ENCODE measurements at regions of chr5 and their contacts with region 1.

Region 1: GRCh38 chr5:139560752-139561654 is at the start of gene UBE2D2:
- DNase-seq: peak; percentile 96 to 100 (median 98)
- ATAC-seq: peak; percentile 78
- H3K4me3 ChIP-seq: peak within 1 kb of the TSS; percentile 79
- H3K4me3 Mint-ChIP-seq: peak within 1 kb of the TSS; percentile 99
- H3K27ac ChIP-seq: peak within 1 kb of the TSS; percentile 85 to 88
- H3K27ac Mint-ChIP-seq: peak within 1 kb of the TSS; percentile 92
- H3K4me1 ChIP-seq: peaks cover 36% of the 10 kb centered on the region
- H3K4me1 Mint-ChIP-seq: peaks cover 44% of the 10 kb centered on the region
- H3K27me3 ChIP-seq: no peaks in the 10 kb centered on the region
- H3K27me3 Mint-ChIP-seq: no peaks in the 10 kb centered on the region
- CTCF ChIP-seq: no peak
- total RNA-seq, gene UBE2D2: 164 to 174 TPM

Region 2: GRCh38 chr5:139341650-139342422 is 219.2 kb before region 1 on chr5 and contains the start of gene PAIP2:
- CTCF ChIA-PET with region 1: no interaction called
- POLR2A ChIA-PET with region 1: interaction called, 27 read pairs
- intact Hi-C with region 1: loop called in 1 of 2 experiments (anchors 5 kb)
- DNase-seq: peak; percentile 95 to 99 (median 97)
- ATAC-seq: peak; percentile 82
- H3K4me3 ChIP-seq: peak within 1 kb of the TSS; percentile 94
- H3K4me3 Mint-ChIP-seq: peak within 1 kb of the TSS; percentile 96
- H3K27ac ChIP-seq: peak within 1 kb of the TSS; percentile 100
- H3K27ac Mint-ChIP-seq: peak within 1 kb of the TSS; percentile 95
- H3K4me1 ChIP-seq: peaks cover 34% of the 10 kb centered on the region
- H3K4me1 Mint-ChIP-seq: peaks cover 65% of the 10 kb centered on the region
- H3K27me3 ChIP-seq: no peaks in the 10 kb centered on the region
- H3K27me3 Mint-ChIP-seq: no peaks in the 10 kb centered on the region
- CTCF ChIP-seq: peak; percentile 70
- total RNA-seq, gene PAIP2: 151 to 156 TPM

Region 3: DNA sequence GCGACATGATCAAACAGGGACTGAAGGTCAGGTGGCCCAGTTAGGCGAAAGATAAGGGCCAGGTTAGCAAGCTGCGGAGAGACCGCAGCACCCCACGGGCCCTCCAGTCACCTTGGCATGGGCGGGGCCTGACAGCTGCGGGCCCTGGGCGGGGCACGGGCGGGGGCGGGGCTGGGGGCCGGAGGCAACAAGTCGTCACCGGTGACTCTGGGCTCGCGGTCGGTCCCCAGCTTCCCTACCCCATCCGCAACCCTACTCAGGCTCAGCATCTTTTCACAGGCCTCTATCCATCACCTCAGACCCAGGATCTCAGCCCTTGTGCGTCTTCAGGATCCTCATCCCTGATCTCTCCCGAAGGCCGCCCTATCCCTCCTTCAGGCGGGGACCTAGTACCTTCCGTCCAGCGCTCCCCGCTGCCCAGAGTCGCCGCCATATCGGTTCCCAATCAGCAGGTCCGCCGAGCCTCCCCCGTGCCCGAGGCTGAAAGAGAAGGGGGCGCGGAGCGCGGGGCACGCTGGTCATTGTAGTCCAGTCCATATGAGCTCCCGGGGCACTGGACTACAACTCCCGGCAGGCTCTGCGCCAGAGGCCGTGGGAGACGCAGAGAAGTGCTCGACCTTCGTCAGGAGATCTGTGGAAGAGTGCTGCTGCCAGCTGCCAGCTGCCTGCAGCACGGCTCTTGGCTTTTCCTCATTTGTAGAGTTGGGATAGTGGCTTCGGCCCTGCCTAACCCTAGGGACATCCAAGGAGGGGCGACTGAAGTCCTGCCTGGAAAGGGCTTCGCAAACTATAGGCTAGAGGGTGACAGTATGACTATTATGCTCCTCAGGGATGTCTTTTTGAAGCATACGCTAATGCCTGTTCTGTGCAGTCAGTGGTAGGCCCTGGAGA is 121.7 kb before region 1 on chr5 and contains the start of gene DNAJC18:
- CTCF ChIA-PET with region 1: interaction called, 3 read pairs
- POLR2A ChIA-PET with region 1: interaction called, 13 read pairs
- intact Hi-C with region 1: loop called in 1 of 2 experiments (anchors 1 kb)
- DNase-seq: peak; percentile 79 to 94 (median 88)
- ATAC-seq: peak; percentile 81
- H3K4me3 ChIP-seq: peak within 1 kb of the TSS; percentile 89
- H3K4me3 Mint-ChIP-seq: peak within 1 kb of the TSS; percentile 98
- H3K27ac ChIP-seq: peak within 1 kb of the TSS; percentile 95 to 99
- H3K27ac Mint-ChIP-seq: peak within 1 kb of the TSS; percentile 96
- H3K4me1 ChIP-seq: peaks cover 31% of the 10 kb centered on the region
- H3K4me1 Mint-ChIP-seq: peaks cover 51% of the 10 kb centered on the region
- H3K27me3 ChIP-seq: no peaks in the 10 kb centered on the region
- H3K27me3 Mint-ChIP-seq: no peaks in the 10 kb centered on the region
- CTCF ChIP-seq: no peak
- total RNA-seq, gene DNAJC18: 7.5 to 8.7 TPM

Region 4: GRCh38 chr5:139517683-139518564 is 43.1 kb before region 1 on chr5:
- CTCF ChIA-PET with region 1: interaction called, 9 read pairs
- POLR2A ChIA-PET with region 1: interaction called, 7 read pairs
- intact Hi-C with region 1: loop called in 1 of 2 experiments (anchors 2 kb)
- DNase-seq: peak; percentile 72 to 95 (median 88)
- ATAC-seq: peak; percentile 92
- H3K4me3 ChIP-seq: peak overlapping the region; percentile 66
- H3K4me3 Mint-ChIP-seq: peak overlapping the region; percentile 88
- H3K27ac ChIP-seq: peak overlapping the region; percentile 64 to 66
- H3K27ac Mint-ChIP-seq: peak overlapping the region; percentile 87
- H3K4me1 ChIP-seq: peaks cover 22% of the 10 kb centered on the region
- H3K4me1 Mint-ChIP-seq: peaks cover 27% of the 10 kb centered on the region
- H3K27me3 ChIP-seq: no peaks in the 10 kb centered on the region
- H3K27me3 Mint-ChIP-seq: no peaks in the 10 kb centered on the region
- CTCF ChIP-seq: peak; percentile 95

Region 5: GRCh38 chr5:139611703-139612584 is 50.9 kb after region 1 on chr5:
- CTCF ChIA-PET with region 1: no interaction called
- POLR2A ChIA-PET with region 1: interaction called, 9 read pairs
- intact Hi-C with region 1: loop called in 1 of 2 experiments (anchors 10 kb)
- DNase-seq: no peak
- ATAC-seq: peak; percentile 29
- H3K4me3 ChIP-seq: no peak overlapping the region
- H3K4me3 Mint-ChIP-seq: no peak overlapping the region
- H3K27ac ChIP-seq: no peak overlapping the region
- H3K27ac Mint-ChIP-seq: peak overlapping the region; percentile 73
- H3K4me1 ChIP-seq: peaks cover under 1% of the 10 kb centered on the region
- H3K4me1 Mint-ChIP-seq: peaks cover 39% of the 10 kb centered on the region
- H3K27me3 ChIP-seq: no peaks in the 10 kb centered on the region
- H3K27me3 Mint-ChIP-seq: no peaks in the 10 kb centered on the region
- CTCF ChIP-seq: no peak

Region 6: GRCh38 chr5:139660923-139661814 is 100.2 kb after region 1 on chr5:
- CTCF ChIA-PET with region 1: no interaction called
- POLR2A ChIA-PET with region 1: no interaction called
- intact Hi-C with region 1: no loop called
- DNase-seq: peak in 3 of 14 experiments; percentile 26 to 79 (median 72)
- ATAC-seq: peak; percentile 22
- H3K4me3 ChIP-seq: no peak overlapping the region
- H3K4me3 Mint-ChIP-seq: no peak overlapping the region
- H3K27ac ChIP-seq: no peak overlapping the region
- H3K27ac Mint-ChIP-seq: no peak overlapping the region
- H3K4me1 ChIP-seq: peaks cover 17% of the 10 kb centered on the region
- H3K4me1 Mint-ChIP-seq: peaks cover 5% of the 10 kb centered on the region
- H3K27me3 ChIP-seq: no peaks in the 10 kb centered on the region
- H3K27me3 Mint-ChIP-seq: peaks cover 4% of the 10 kb centered on the region
- CTCF ChIP-seq: no peak

Region 7: DNA sequence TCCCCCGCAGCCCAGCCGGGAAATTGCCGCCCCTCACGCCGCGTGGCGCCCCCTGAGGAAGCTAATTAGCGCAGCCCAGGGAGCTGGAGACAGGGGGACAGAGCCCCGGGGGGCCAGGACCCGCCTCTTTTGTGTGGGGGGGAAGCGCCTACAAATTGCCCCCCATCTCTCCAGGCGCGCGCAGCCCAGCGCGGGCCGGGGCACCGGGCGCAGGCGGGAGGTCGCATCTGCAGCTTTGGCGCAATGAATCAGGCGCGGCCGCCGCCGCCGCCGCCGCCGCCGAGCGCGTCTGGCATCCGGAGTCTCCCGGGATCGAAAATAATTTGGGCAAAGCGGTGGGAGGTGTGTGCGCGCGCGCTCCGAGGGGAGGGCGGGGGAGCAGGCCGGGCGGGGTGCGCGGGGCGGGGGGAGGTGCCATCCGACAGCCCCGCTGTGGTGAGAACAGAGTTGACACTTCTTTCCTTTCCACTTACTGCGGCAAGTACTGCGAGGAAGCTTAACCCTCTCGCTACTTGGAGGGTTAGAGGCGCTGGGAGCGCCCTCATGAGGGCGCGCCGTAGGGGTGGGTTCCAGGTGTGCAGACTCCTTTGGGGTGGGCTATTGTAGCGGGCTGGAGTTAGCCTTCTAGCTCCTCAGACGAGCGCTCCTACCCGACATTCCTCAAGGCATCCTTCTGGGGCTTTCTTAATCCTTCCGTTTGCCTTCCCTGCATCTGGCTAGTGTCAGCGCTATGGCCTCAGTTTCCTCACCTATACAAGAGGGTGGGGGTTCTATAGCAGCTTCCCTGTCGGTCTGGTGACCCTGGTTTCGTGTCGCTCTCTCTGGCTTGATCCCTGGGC is 150.3 kb after region 1 on chr5:
- CTCF ChIA-PET with region 1: no interaction called
- POLR2A ChIA-PET with region 1: interaction called, 10 read pairs
- intact Hi-C with region 1: no loop called
- DNase-seq: peak in 13 of 14 experiments; percentile 26 to 82 (median 52)
- ATAC-seq: peak; percentile 69
- H3K4me3 ChIP-seq: peak overlapping the region; percentile 60
- H3K4me3 Mint-ChIP-seq: peak overlapping the region; percentile 80
- H3K27ac ChIP-seq: no peak overlapping the region
- H3K27ac Mint-ChIP-seq: peak overlapping the region; percentile 36
- H3K4me1 ChIP-seq: peaks cover 34% of the 10 kb centered on the region
- H3K4me1 Mint-ChIP-seq: peaks cover 30% of the 10 kb centered on the region
- H3K27me3 ChIP-seq: peaks cover 5 to 7% of the 10 kb centered on the region in 2 experiments
- H3K27me3 Mint-ChIP-seq: peaks cover 16% of the 10 kb centered on the region
- CTCF ChIP-seq: no peak

Region 8: DNA sequence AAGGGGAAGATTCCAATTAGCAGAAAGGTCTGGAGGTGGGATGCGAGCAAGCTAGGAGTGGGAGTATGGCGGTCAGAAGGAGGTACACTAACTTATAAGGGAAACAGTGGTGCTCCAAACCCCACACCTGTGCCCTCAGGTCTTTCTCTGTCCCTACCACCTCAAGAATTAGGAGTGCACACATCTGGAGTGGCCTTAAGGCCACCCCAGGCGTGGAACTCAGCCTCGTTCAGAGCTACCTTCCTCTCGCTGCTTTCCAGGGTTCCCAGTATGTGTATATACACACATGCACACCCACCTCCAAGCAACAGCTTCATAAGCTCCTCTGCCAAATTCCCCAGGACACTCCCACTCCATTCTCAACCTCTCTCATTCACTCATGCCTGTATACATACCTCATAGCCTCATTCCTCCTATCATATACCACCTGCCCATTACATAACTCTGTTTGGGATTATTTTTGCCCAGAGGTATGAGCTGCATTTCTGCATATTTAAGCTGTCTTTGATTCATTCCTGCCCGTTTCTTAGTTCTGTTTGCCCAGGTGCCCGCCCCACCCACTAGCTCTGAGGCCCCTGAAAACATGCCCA is 353.3 kb after region 1 on chr5:
- CTCF ChIA-PET with region 1: no interaction called
- POLR2A ChIA-PET with region 1: no interaction called
- intact Hi-C with region 1: no loop called
- DNase-seq: no peak
- ATAC-seq: no peak
- H3K4me3 ChIP-seq: no peak overlapping the region
- H3K4me3 Mint-ChIP-seq: no peak overlapping the region
- H3K27ac ChIP-seq: no peak overlapping the region
- H3K27ac Mint-ChIP-seq: no peak overlapping the region
- H3K4me1 ChIP-seq: no peaks in the 10 kb centered on the region
- H3K4me1 Mint-ChIP-seq: no peaks in the 10 kb centered on the region
- H3K27me3 ChIP-seq: peaks cover 15 to 21% of the 10 kb centered on the region in 2 experiments
- H3K27me3 Mint-ChIP-seq: peaks cover 24% of the 10 kb centered on the region
- CTCF ChIP-seq: no peak

Region 9: DNA sequence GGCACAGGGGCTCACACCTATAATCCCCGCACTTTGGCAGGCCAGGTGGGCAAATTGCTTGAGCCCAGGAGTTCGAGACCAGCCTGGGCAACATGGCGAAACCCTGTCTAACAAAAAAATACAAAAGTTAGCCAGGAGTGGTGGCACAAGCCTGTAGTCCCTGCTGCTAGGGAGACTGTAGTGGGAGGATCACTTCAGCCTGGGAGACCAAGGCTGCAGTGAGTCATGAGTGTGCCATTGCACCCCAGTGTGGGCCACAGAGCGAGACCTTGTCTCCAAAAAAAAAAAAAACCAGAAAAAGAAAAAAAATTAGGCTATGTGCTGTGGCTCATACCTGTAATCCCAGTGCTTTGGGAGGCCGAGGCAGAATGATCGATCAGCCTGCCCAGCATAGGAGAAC is 927.9 kb after region 1 on chr5:
- CTCF ChIA-PET with region 1: no interaction called
- POLR2A ChIA-PET with region 1: no interaction called
- intact Hi-C with region 1: no loop called
- DNase-seq: no peak
- ATAC-seq: no peak
- H3K4me3 ChIP-seq: no peak overlapping the region
- H3K4me3 Mint-ChIP-seq: no peak overlapping the region
- H3K27ac ChIP-seq: no peak overlapping the region
- H3K27ac Mint-ChIP-seq: no peak overlapping the region
- H3K4me1 ChIP-seq: no peaks in the 10 kb centered on the region
- H3K4me1 Mint-ChIP-seq: no peaks in the 10 kb centered on the region
- H3K27me3 ChIP-seq: no peaks in the 10 kb centered on the region
- H3K27me3 Mint-ChIP-seq: no peaks in the 10 kb centered on the region
- CTCF ChIP-seq: no peak